Activated T-helper 1 cell treated with anti-CD3 and anti-CD28 coated beads, Interleukin-12 subunit alpha, Interleukin-12 subunit beta, Interleukin-2, Interleukin-4 antibody, amounts not matched to agents 30 ng/mL and 10 ng/mL and 1 ng/mL, durations not matched to agents 14 hours and 24 hours and 36 hours (primary cell): ENCODE measurements at regions of chr19 and their contacts with region 1.

Region 1: GRCh38 chr19:38849860-38850435 is at the start of gene HNRNPL:
- DNase-seq: peak; percentile 99
- H3K4me3 Mint-ChIP-seq: peak within 1 kb of the TSS; percentile 97
- H3K27ac Mint-ChIP-seq: peak within 1 kb of the TSS; percentile 99
- H3K4me1 Mint-ChIP-seq: peaks cover 50% of the 10 kb centered on the region
- H3K27me3 Mint-ChIP-seq: peaks cover 2% of the 10 kb centered on the region
- total RNA-seq, gene HNRNPL: 632 and 659 TPM in 2 replicates

Region 2: DNA sequence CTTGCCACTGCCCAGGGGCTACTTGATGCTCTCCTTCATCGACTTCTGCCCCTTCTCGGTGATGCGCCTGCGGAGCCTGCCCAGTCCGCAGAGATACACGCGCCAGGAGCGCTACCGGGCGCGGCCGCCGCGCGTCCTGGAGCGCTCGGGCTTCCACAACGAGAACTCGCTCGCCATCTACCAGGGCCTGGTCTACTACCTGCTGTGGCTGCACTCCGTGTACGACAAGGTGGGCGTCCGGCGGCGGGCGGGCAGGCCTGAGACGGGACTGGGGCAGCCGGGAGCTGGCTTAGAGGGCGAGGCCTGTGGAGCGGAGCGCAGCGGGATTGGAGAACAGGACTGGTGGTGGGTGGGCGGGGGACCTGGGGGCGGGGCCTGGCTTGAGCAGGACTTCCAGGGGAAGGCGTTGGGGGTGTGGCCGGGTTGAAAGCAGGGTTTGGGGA is 488.3 kb before region 1 on chr19:
- intact Hi-C with region 1: loop called (anchors 1 kb)
- DNase-seq: peak; percentile 69
- H3K4me3 Mint-ChIP-seq: peak overlapping the region; percentile 90
- H3K27ac Mint-ChIP-seq: peak overlapping the region; percentile 61
- H3K4me1 Mint-ChIP-seq: peaks cover 22% of the 10 kb centered on the region
- H3K27me3 Mint-ChIP-seq: peaks cover 30% of the 10 kb centered on the region

Region 3: GRCh38 chr19:38559428-38560401 is 290.2 kb before region 1 on chr19:
- intact Hi-C with region 1: loop called (anchors 10 kb)
- DNase-seq: peak; percentile 47
- H3K4me3 Mint-ChIP-seq: peak overlapping the region; percentile 38
- H3K27ac Mint-ChIP-seq: peak overlapping the region; percentile 76
- H3K4me1 Mint-ChIP-seq: peaks cover 56% of the 10 kb centered on the region
- H3K27me3 Mint-ChIP-seq: peaks cover 23% of the 10 kb centered on the region

Region 4: GRCh38 chr19:38658462-38659306 is 191.3 kb before region 1 on chr19:
- intact Hi-C with region 1: loop called (anchors 2 kb)
- DNase-seq: no peak
- H3K4me3 Mint-ChIP-seq: no peak overlapping the region
- H3K27ac Mint-ChIP-seq: no peak overlapping the region
- H3K4me1 Mint-ChIP-seq: peaks cover 63% of the 10 kb centered on the region
- H3K27me3 Mint-ChIP-seq: no peaks in the 10 kb centered on the region

Region 5: DNA sequence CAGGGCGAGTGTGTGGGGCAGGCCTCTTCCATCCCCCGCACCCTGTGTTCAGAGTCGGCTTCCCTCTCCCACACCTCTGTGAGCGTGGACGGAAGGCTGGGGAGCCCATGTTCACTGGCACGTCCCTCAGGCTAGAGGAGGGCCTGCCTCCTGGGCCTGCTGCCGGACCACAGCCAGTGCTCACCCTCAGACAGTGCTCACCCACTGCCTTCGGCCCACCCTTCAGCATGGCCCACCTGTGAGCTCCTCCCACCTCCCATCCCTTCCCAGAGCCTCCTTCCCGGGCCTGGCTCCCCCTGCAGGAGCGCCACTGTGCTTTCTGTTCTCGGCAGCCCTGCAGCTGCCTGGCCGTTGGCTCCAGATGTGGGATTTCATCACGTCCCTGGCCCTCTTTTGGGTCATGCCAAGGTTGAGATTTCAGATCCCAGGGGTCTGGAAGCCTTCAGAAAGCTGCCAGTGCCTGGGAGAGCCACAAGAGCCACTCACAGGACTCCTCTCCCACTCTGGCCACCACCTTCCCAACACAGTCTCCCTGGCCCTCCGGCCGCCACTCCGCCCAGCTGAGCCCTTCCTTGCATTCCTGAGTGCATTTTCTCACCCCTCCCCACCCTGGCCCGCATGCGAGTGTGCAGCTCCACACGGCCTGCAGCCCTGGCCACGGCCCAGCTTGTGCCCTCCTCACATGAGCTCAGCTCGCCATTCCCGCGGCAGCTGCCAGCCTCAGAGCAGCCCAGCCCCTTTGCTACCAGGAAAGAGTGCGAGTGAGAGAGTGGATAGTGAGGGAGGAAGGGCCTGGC is 131.0 kb before region 1 on chr19:
- intact Hi-C with region 1: no loop called
- DNase-seq: no peak
- H3K4me3 Mint-ChIP-seq: no peak overlapping the region
- H3K27ac Mint-ChIP-seq: no peak overlapping the region
- H3K4me1 Mint-ChIP-seq: no peaks in the 10 kb centered on the region
- H3K27me3 Mint-ChIP-seq: no peaks in the 10 kb centered on the region

Region 6: GRCh38 chr19:38869856-38870607 is 20.1 kb after region 1 on chr19:
- intact Hi-C with region 1: loop called (anchors 1 kb)
- DNase-seq: peak; percentile 92
- H3K4me3 Mint-ChIP-seq: peak overlapping the region; percentile 86
- H3K27ac Mint-ChIP-seq: peak overlapping the region; percentile 87
- H3K4me1 Mint-ChIP-seq: peaks cover 42% of the 10 kb centered on the region
- H3K27me3 Mint-ChIP-seq: no peaks in the 10 kb centered on the region

Region 7: GRCh38 chr19:39341719-39342604 is 492.0 kb after region 1 on chr19 and contains the start of gene SAMD4B:
- intact Hi-C with region 1: loop called (anchors 5 kb)
- DNase-seq: peak; percentile 99
- H3K4me3 Mint-ChIP-seq: peak within 1 kb of the TSS; percentile 99
- H3K27ac Mint-ChIP-seq: peak within 1 kb of the TSS; percentile 96
- H3K4me1 Mint-ChIP-seq: peaks cover 73% of the 10 kb centered on the region
- H3K27me3 Mint-ChIP-seq: no peaks in the 10 kb centered on the region
- total RNA-seq, gene SAMD4B: 71.3 and 71.8 TPM in 2 replicates